Activated CD4-positive, alpha-beta T cell treated with anti-CD3 and anti-CD28 coated beads for 36 hours (primary cell): ENCODE measurements at regions of chr5 and their contacts with region 1.

Region 1: GRCh38 chr5:109688971-109689739 is 572 bp upstream of the MAN2A1 start:
- DNase-seq: peak; percentile 87
- ATAC-seq: peak; percentile 82
- H3K4me3 Mint-ChIP-seq: peak overlapping the region; percentile 95
- H3K27ac Mint-ChIP-seq: peak overlapping the region; percentile 92
- H3K4me1 Mint-ChIP-seq: peaks cover 36% of the 10 kb centered on the region
- H3K27me3 Mint-ChIP-seq: no peaks in the 10 kb centered on the region

Region 2: DNA sequence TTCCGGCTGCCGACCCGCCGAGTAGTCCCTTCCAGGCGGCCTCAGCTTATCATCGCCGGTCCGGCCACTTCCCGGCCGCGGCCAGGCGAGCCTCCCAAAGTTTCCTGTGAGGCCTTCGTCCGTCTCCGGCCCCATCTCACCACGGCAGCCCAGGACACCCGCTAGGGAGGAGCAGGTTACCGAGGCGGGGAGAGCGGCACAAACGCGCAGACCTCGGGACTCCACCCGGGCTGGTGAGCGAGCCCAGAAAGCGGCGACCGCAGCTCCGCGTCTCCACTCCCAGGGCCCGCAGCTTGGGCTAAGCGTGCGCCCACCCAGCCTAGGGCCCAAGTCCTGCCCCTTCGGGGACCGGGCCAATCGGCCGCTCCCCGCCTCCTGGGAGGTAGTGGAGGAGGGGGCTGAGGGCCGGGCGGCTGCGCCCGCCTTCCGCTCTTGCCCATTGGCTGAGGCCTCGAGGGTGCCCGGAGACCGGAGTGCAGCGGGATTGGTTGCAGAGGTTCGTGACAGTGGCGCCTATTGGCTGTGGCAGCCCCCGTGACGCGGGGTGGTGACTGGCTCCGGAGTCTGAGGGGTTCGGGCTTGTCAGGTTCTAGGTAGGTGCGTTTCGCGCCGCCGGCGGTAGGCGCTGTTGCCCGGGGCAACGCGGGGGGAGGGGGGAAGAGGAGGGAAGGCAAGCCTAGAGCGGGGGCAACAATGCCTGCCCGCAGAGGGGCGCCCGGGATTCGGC is 940.6 kb before region 1 on chr5:
- CTCF ChIA-PET with region 1: no interaction called
- POLR2A ChIA-PET with region 1: no interaction called
- intact Hi-C with region 1: loop called (anchors 1 to 2 kb)
- DNase-seq: peak; percentile 98
- ATAC-seq: peak; percentile 98
- H3K4me3 Mint-ChIP-seq: peak overlapping the region; percentile 75
- H3K27ac Mint-ChIP-seq: peak overlapping the region; percentile 89
- H3K4me1 Mint-ChIP-seq: peaks cover 18% of the 10 kb centered on the region
- H3K27me3 Mint-ChIP-seq: no peaks in the 10 kb centered on the region

Region 3: GRCh38 chr5:109844695-109845094 is 155.5 kb after region 1 on chr5:
- CTCF ChIA-PET with region 1: no interaction called
- POLR2A ChIA-PET with region 1: no interaction called
- intact Hi-C with region 1: loop called in 1 of 2 experiments (anchors 5 kb)
- DNase-seq: no peak
- ATAC-seq: no peak
- H3K4me3 Mint-ChIP-seq: no peak overlapping the region
- H3K27ac Mint-ChIP-seq: no peak overlapping the region
- H3K4me1 Mint-ChIP-seq: peaks cover 22% of the 10 kb centered on the region
- H3K27me3 Mint-ChIP-seq: no peaks in the 10 kb centered on the region

Region 4: GRCh38 chr5:109936996-109937395 is 247.8 kb after region 1 on chr5:
- CTCF ChIA-PET with region 1: no interaction called
- POLR2A ChIA-PET with region 1: no interaction called
- intact Hi-C with region 1: loop called in 1 of 2 experiments (anchors 5 kb)
- DNase-seq: peak; percentile 74
- ATAC-seq: peak; percentile 75
- H3K4me3 Mint-ChIP-seq: no peak overlapping the region
- H3K27ac Mint-ChIP-seq: peak overlapping the region; percentile 72
- H3K4me1 Mint-ChIP-seq: peaks cover 23% of the 10 kb centered on the region
- H3K27me3 Mint-ChIP-seq: peaks cover 2% of the 10 kb centered on the region

Region 5: DNA sequence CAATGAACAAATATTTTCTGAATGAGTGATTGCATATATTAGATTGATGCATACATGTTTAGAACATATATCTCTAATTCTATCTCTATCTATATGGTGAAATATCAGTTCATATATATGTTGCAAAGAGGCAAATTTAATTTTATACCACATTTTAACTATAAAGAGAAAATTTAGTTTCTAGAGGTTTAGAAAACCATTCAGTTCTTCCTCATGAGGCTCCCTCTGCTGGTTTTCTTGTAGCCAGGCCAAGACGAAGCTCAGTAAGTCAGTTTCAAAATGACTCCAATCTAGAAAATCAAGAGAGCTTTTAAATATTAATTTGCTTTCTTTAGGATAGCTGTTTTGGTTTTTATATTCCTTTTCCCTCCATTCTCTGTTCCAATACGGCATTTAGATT is 725.2 kb after region 1 on chr5:
- CTCF ChIA-PET with region 1: interaction called, 4 read pairs
- POLR2A ChIA-PET with region 1: no interaction called
- intact Hi-C with region 1: loop called in 1 of 2 experiments (anchors 10 kb)
- DNase-seq: peak; percentile 7
- ATAC-seq: no peak
- H3K4me3 Mint-ChIP-seq: no peak overlapping the region
- H3K27ac Mint-ChIP-seq: no peak overlapping the region
- H3K4me1 Mint-ChIP-seq: peaks cover 5% of the 10 kb centered on the region
- H3K27me3 Mint-ChIP-seq: no peaks in the 10 kb centered on the region

Region 6: GRCh38 chr5:110738812-110739651 is 1049.9 kb after region 1 on chr5 and contains the start of gene SLC25A46:
- CTCF ChIA-PET with region 1: no interaction called
- POLR2A ChIA-PET with region 1: no interaction called
- intact Hi-C with region 1: loop called (anchors 2 kb)
- DNase-seq: peak; percentile 92
- ATAC-seq: peak; percentile 89
- H3K4me3 Mint-ChIP-seq: peak within 1 kb of the TSS; percentile 87
- H3K27ac Mint-ChIP-seq: peak within 1 kb of the TSS; percentile 91
- H3K4me1 Mint-ChIP-seq: peaks cover 17% of the 10 kb centered on the region
- H3K27me3 Mint-ChIP-seq: peaks cover 4% of the 10 kb centered on the region
- total RNA-seq, gene SLC25A46: 32.3 to 35.3 TPM